ENCODE measurements at regions of chr14 and their contacts with region 1.

Region 1: GRCh38 chr14:63770187-63770807 is 42.4 kb upstream of the SGPP1 start:
- DNase-seq: peak; percentile 77
- H3K4me3 ChIP-seq: no peak overlapping the region
- H3K27ac ChIP-seq: no peak overlapping the region
- H3K4me1 ChIP-seq: no peaks in the 10 kb centered on the region
- CTCF ChIP-seq: peak; percentile 94

Region 2: GRCh38 chr14:63388763-63389431 is 381.4 kb before region 1 on chr14:
- CTCF ChIA-PET with region 1: interaction called, 3 read pairs
- POLR2A ChIA-PET with region 1: no interaction called
- intact Hi-C with region 1: loop called (anchors 2 kb)
- DNase-seq: peak; percentile 65
- H3K4me3 ChIP-seq: no peak overlapping the region
- H3K27ac ChIP-seq: no peak overlapping the region
- H3K4me1 ChIP-seq: no peaks in the 10 kb centered on the region
- CTCF ChIP-seq: peak; percentile 96

Region 3: DNA sequence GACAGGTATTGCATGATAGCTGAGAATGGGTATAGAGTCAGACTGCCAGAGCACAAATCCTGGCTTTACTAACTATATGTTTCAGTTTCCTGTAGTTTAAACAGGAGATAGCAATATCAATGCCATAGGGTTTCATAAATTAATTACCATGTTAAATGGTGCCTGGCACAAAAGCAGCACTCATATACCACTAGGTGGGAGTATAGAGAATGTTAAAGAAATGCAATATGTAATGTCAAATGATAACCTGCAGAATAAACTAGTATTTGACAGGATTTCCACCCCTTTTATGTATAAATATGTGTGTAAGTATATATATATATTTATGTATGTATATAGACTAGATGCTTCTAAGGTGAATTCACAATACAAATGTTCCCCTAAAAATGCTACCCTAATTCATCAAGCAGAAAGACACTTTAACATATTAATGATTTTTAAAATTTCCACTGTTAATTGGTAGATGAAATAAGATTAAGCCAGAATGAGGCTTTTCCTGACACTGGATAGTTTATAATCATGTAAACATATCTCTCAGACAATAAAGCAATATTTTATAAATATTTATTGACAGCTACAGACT is 137.3 kb before region 1 on chr14:
- CTCF ChIA-PET with region 1: no interaction called
- POLR2A ChIA-PET with region 1: interaction called, 4 read pairs
- intact Hi-C with region 1: loop called (anchors 1 kb)
- DNase-seq: peak; percentile 66
- H3K4me3 ChIP-seq: no peak overlapping the region
- H3K27ac ChIP-seq: no peak overlapping the region
- H3K4me1 ChIP-seq: no peaks in the 10 kb centered on the region
- CTCF ChIP-seq: peak; percentile 90

Region 4: GRCh38 chr14:63737582-63738006 is 32.7 kb before region 1 on chr14:
- CTCF ChIA-PET with region 1: no interaction called
- POLR2A ChIA-PET with region 1: no interaction called
- intact Hi-C with region 1: no loop called
- DNase-seq: no peak
- H3K4me3 ChIP-seq: peak overlapping the region; percentile 18
- H3K27ac ChIP-seq: no peak overlapping the region
- H3K4me1 ChIP-seq: peaks cover 19% of the 10 kb centered on the region
- CTCF ChIP-seq: no peak

Region 5: DNA sequence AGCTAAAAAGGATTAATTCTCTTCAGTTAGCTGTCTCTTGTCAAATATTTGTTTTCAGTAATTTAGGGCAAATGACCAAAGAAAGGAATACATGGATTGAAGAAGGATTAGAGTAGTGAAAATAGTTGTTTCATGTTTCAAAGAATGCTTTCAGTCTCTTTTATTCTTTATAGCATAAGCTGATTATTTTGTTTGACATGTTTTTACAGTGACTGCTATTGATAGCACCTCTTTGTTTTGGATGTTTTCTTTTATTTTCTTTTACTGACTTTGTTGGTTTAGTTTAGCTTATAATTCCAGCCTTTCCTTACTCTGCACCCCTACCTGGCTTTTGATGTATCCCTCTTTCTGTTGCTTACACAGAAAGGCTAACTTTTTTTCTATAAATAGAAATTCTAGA is 13.1 kb before region 1 on chr14:
- CTCF ChIA-PET with region 1: no interaction called
- POLR2A ChIA-PET with region 1: interaction called, 11 read pairs
- intact Hi-C with region 1: no loop called
- DNase-seq: no peak
- H3K4me3 ChIP-seq: no peak overlapping the region
- H3K27ac ChIP-seq: no peak overlapping the region
- H3K4me1 ChIP-seq: peaks cover 10% of the 10 kb centered on the region
- CTCF ChIP-seq: no peak

Region 6: DNA sequence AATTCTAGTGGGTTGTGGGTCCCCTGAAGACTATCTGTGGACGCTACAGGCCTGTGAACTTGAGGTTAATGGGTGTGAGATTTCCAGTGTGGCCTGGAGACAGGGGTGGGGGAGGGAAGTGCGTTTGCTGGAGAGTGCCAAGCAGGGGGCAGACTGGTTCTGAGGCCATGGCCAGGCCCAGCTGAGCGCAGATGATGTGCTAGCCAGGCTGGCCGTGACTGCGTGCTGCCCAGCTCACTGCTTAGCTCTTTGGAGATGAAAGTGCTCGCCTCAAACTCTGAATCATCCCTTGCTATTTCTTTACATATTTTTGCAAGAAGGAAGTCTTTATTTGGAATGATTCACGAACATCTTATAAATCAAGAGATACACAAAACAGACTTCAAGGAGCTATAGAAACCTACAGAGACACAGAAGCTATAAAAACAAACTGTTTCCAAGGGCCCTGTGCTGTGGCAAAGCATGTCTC is 858.7 kb after region 1 on chr14:
- CTCF ChIA-PET with region 1: no interaction called
- POLR2A ChIA-PET with region 1: no interaction called
- intact Hi-C with region 1: no loop called
- DNase-seq: no peak
- H3K4me3 ChIP-seq: no peak overlapping the region
- H3K27ac ChIP-seq: no peak overlapping the region
- H3K4me1 ChIP-seq: no peaks in the 10 kb centered on the region
- CTCF ChIP-seq: no peak